ENCODE measurements at regions of chr7 and their contacts with region 1.

Region 1: DNA sequence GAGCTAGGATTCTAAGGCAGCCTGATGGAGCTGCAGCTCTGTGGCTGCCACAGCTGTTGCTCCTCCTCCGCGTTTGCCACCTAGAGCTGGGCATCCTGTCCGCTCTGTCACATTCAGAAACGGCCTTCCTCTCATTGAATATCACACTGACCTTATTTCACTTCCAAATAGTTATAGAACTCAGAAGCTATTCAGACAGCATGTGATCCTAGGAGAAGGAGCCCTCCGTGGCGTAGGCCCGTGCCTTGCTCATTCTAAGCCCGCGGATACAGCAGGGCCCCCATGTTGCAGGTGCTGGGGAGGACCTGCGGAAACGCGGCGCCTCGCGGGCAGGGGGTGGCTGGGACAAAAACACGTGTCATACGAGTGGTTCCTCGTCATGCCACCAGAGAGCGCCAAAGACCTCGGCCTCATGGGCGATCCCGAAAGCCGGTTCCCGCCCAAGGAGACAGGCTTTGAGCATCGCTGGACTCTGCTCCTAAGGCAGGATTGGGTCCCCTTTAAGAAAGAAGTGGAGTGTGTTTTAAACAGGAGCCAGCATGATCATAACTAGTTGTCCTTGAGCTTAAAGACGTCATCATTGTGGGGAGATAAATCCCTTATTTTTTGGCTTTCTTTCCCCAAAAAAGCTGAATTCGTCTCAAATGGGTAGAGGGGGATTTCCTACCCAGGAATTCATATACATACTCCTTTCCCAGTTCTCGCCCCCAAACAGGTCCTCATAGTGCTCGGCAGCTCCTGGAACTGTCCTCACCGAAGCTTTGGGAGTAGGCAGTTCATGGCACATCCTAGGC is 17.9 kb upstream of the FIGNL1 start:
- DNase-seq: peak; percentile 86
- H3K4me3 Mint-ChIP-seq: peak overlapping the region; percentile 23
- H3K27ac Mint-ChIP-seq: no peak overlapping the region
- H3K4me1 Mint-ChIP-seq: peaks cover 11% of the 10 kb centered on the region
- H3K27me3 Mint-ChIP-seq: peaks cover 1% of the 10 kb centered on the region

Region 2: GRCh38 chr7:50497068-50497642 is 29.1 kb after region 1 on chr7:
- CTCF ChIA-PET with region 1: no interaction called
- POLR2A ChIA-PET with region 1: no interaction called
- DNase-seq: no peak
- H3K4me3 Mint-ChIP-seq: no peak overlapping the region
- H3K27ac Mint-ChIP-seq: no peak overlapping the region
- H3K4me1 Mint-ChIP-seq: no peaks in the 10 kb centered on the region
- H3K27me3 Mint-ChIP-seq: peaks cover 27% of the 10 kb centered on the region

Region 3: DNA sequence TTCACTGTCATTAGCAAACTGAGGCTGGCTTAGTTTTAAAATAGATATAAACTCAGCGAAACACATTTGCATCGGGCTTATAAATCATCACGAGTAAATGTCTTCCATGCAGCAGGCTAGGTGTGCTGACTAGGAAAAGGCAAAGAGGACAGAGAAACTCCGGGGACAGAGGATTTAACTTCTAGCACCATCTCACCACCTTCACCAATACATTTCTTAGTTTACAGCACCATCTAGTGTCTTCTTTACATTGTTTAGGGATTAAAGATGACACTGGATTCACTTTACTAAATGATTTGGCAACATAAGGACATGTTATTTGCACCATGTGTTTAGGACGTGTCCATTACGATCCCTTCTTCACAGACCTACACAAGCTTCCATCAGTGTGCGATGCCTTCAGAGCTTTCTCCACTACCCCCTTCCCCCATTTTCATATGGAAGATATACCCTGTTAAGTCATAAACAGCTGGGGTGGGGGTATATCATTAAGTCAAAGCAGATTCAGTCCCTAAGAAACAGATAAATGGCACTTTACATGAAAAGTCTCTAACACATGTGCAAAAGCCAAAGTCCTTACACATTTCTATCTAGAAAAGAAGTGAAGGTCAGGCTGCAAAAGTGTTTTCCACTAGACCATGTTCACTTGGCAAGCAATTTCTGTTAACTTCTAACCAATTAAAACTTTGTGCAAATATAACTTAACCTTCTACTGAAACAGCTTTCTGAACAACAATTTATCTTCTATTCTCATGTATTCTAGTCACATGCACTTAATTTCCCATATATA is 211.4 kb after region 1 on chr7:
- CTCF ChIA-PET with region 1: interaction called, 13 read pairs
- POLR2A ChIA-PET with region 1: no interaction called
- DNase-seq: no peak
- H3K4me3 Mint-ChIP-seq: no peak overlapping the region
- H3K27ac Mint-ChIP-seq: no peak overlapping the region
- H3K4me1 Mint-ChIP-seq: peaks cover 2% of the 10 kb centered on the region
- H3K27me3 Mint-ChIP-seq: peaks cover 10% of the 10 kb centered on the region

Measured in activated CD4-positive, alpha-beta T cell treated with anti-CD3 and anti-CD28 coated beads, Interleukin-2, amount 10 ng/mL, durations not matched to agents 7 days and 5 days (primary cell).